Tibial artery (tissue), 4 donors: ENCODE measurements at regions of chr2 and their contacts with region 1.

Region 1: GRCh38 chr2:127591221-127591923 is 54.6 kb upstream of the GPR17 start:
- DNase-seq: peak in 1 of 2 donors; percentile 25
- H3K4me3 ChIP-seq: no peak overlapping the region
- H3K27ac ChIP-seq: no peak overlapping the region
- H3K4me1 ChIP-seq: no peaks in the 10 kb centered on the region
- H3K27me3 ChIP-seq: no peaks in the 10 kb centered on the region
- CTCF ChIP-seq: peak; percentile 61 to 84

Region 2: GRCh38 chr2:127463155-127463991 is 128.0 kb before region 1 on chr2:
- intact Hi-C with region 1: no loop called
- DNase-seq: no peak
- H3K4me3 ChIP-seq: no peak overlapping the region
- H3K27ac ChIP-seq: no peak overlapping the region
- H3K4me1 ChIP-seq: no peaks in the 10 kb centered on the region
- H3K27me3 ChIP-seq: no peaks in the 10 kb centered on the region
- CTCF ChIP-seq: no peak

Region 3: GRCh38 chr2:127526149-127527000 is 65.0 kb before region 1 on chr2 and contains the start of gene IWS1:
- intact Hi-C with region 1: no loop called
- DNase-seq: peak; percentile 97
- H3K4me3 ChIP-seq: peak within 1 kb of the TSS; percentile 77 to 84
- H3K27ac ChIP-seq: peak within 1 kb of the TSS; percentile 91
- H3K4me1 ChIP-seq: peaks cover 0 to 23% (median 20%) of the 10 kb centered on the region in 4 donors
- H3K27me3 ChIP-seq: no peaks in the 10 kb centered on the region
- CTCF ChIP-seq: peak; percentile 48 to 73

Region 4: DNA sequence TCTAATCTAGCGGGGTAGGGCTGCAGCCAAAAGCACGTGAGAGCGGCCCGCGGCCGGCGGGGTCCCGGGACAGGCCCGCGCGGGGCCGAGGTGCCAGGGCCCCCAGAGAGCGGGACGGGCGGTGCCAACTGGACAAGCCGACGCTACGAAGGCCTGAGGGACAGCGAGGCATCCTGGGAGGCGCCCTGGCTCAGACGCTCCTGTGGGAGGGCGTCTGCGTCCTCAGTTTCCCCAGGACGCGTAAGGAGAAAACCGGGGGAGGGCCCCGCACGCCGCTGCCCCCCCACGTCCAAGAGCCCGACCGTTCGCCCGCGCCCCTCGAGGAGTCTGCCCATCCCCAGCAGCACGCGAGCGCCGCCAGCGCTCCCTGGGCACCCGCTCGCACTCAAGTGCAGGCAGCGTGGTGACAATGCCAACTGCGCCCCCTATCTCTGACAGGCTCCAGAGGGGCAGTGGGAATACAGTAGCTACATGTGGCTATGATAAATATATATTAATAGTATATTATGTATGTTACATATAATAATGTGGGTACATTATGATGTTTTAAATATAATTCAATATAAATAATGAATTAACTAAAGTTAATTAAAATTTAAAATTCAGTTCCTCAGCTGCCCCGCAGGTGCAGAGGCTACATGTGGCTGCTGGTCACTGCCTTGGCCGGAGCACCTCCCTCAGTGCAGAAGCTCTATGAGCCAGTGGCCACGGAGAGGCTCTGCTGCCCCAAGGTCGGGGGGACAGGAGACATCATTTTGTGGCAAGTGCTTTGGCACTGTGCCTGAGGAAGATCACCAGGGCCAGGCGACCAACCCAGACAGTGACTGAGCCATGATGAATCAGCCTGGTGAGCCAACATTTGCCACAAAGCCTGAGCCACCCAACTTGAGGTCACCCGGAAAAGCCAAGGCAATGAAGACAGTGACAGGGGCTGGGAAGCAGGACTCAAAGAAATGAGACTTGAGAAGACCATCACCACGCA is 104.4 kb after region 1 on chr2:
- intact Hi-C with region 1: loop called (anchors 5 kb)
- DNase-seq: peak; percentile 71 to 89
- H3K4me3 ChIP-seq: peak overlapping the region; percentile 41 to 44
- H3K27ac ChIP-seq: peak overlapping the region; percentile 62 to 87
- H3K4me1 ChIP-seq: peaks cover 0 to 24% (median 8%) of the 10 kb centered on the region in 4 donors
- H3K27me3 ChIP-seq: no peaks in the 10 kb centered on the region
- CTCF ChIP-seq: peak; percentile 51 to 54